ENCODE measurements at regions of chr2 and their contacts with region 1.

Region 1: DNA sequence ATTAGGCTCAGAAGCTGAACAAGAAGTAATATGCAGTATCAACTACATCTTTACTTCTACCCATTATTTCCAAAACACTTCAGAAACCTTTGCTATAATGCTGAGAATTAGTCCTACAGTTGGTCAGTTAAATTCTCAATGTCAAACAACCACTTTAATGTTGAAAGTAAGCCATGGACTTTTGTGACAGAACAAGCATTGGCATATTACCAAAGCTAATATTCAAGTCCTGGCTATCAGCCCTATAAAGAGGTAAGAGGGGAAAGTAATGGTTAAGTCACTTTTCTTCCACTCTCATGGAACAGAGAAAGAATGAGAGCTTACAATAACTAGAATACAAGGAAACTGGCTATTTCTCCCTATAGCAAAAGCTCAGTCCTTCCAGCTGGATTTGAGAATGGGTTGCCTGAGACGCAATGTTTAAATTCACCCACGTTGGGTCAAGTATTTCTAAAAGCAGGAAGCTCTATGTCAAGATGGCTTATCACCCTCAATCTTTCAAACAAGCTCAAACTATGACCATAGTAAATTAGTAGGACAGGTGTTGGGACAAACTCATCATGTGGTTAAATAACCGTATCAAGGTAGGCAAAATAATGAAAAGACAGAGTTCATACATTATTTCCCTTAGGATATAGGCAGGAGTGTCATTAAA is 31.4 kb upstream of the MFSD6 start:
- DNase-seq: no peak
- ATAC-seq: no peak
- H3K4me3 ChIP-seq: no peak overlapping the region
- H3K4me3 Mint-ChIP-seq: no peak overlapping the region
- H3K27ac ChIP-seq: no peak overlapping the region
- H3K27ac Mint-ChIP-seq: no peak overlapping the region
- H3K4me1 ChIP-seq: no peaks in the 10 kb centered on the region
- H3K4me1 Mint-ChIP-seq: peaks cover 0 to 5% (median 0%) of the 10 kb centered on the region in 7 donors
- H3K27me3 ChIP-seq: no peaks in the 10 kb centered on the region
- H3K27me3 Mint-ChIP-seq: peaks cover 0 to 3% (median 0%) of the 10 kb centered on the region in 5 donors

Region 2: GRCh38 chr2:189751080-189751658 is 625.5 kb before region 1 on chr2:
- CTCF ChIA-PET with region 1: no interaction called
- POLR2A ChIA-PET with region 1: no interaction called
- intact Hi-C with region 1: loop called in 1 of 2 experiments (anchors 1 kb)
- DNase-seq: peak in 7 of 9 donors; percentile 26 to 63 (median 49)
- ATAC-seq: peak; percentile 87
- H3K4me3 ChIP-seq: no peak overlapping the region
- H3K4me3 Mint-ChIP-seq: no peak overlapping the region
- H3K27ac ChIP-seq: no peak overlapping the region
- H3K27ac Mint-ChIP-seq: peak overlapping the region in 1 of 9 donors; percentile 1
- H3K4me1 ChIP-seq: no peaks in the 10 kb centered on the region
- H3K4me1 Mint-ChIP-seq: peaks cover 0 to 4% (median 0%) of the 10 kb centered on the region in 7 donors
- H3K27me3 ChIP-seq: no peaks in the 10 kb centered on the region
- H3K27me3 Mint-ChIP-seq: no peaks in the 10 kb centered on the region

Region 3: DNA sequence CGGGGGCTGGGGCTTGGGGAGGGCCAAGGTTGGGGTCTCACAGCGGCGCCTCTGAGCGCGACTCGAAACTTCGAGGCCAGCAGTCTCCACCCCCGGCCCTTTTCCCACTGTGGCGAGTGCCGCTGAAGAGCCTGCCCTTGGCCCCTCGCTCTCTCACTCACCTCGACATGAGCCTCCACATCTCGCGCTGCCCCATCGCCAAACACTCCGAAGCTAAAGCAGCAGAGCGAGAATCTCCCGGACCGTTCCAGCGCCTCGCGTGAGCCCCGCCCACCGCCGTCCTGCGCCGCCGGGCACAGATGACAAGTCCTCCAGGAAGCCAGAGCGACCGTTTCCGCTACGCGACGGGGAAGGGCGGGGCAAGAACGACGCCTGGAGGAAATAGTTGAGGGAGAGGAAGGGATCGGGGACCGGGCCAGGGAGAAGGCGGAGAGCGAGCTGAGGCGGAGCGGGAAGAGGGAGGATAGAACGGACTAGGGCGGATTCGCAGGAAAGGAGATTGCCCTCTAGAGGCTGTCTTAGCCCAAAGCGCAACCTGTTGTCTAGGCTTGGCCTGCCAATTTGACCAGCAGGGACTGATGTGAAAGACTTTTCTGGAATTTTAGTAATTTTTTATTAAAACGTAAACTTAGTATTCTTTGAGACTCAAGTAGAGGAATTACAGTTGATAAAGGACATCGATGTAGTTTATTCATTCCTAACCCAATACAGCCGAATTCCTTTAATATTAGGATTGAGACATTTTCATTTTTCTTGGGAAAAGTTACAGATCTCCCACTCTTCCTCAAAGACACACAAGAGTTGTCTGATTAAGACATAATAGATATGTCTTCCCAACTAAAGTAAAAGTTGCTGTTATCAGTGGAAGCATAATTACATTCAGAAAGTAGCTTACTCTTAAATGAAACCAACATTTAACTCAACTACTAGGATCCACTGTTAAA is 56.9 kb before region 1 on chr2 and contains the start of gene HIBCH:
- CTCF ChIA-PET with region 1: no interaction called
- POLR2A ChIA-PET with region 1: no interaction called
- intact Hi-C with region 1: loop called (anchors 1 to 2 kb)
- DNase-seq: peak; percentile 56 to 88 (median 68)
- ATAC-seq: peak; percentile 94
- H3K4me3 ChIP-seq: peak within 1 kb of the TSS; percentile 83
- H3K4me3 Mint-ChIP-seq: peak within 1 kb of the TSS; percentile 85 to 100 (median 97)
- H3K27ac ChIP-seq: peak within 1 kb of the TSS; percentile 82
- H3K27ac Mint-ChIP-seq: peak within 1 kb of the TSS; percentile 91 to 99 (median 95)
- H3K4me1 ChIP-seq: peaks cover 8 to 13% of the 10 kb centered on the region in 2 donors
- H3K4me1 Mint-ChIP-seq: peaks cover 27 to 54% (median 48%) of the 10 kb centered on the region in 7 donors
- H3K27me3 ChIP-seq: no peaks in the 10 kb centered on the region
- H3K27me3 Mint-ChIP-seq: no peaks in the 10 kb centered on the region
- total RNA-seq, gene HIBCH: 11.3 to 25.0 (median 21.6) TPM

Region 4: GRCh38 chr2:190343500-190344275 is 33.0 kb before region 1 on chr2 and contains the start of gene INPP1:
- CTCF ChIA-PET with region 1: no interaction called
- POLR2A ChIA-PET with region 1: no interaction called
- intact Hi-C with region 1: loop called (anchors 1 kb)
- DNase-seq: peak; percentile 9 to 57 (median 28)
- ATAC-seq: peak; percentile 86
- H3K4me3 ChIP-seq: peak within 1 kb of the TSS; percentile 66
- H3K4me3 Mint-ChIP-seq: peak within 1 kb of the TSS; percentile 64 to 94 (median 88)
- H3K27ac ChIP-seq: peak within 1 kb of the TSS; percentile 26
- H3K27ac Mint-ChIP-seq: peak within 1 kb of the TSS in 6 of 9 donors; percentile 32 to 74 (median 58)
- H3K4me1 ChIP-seq: peaks cover 3 to 11% of the 10 kb centered on the region in 2 donors
- H3K4me1 Mint-ChIP-seq: peaks cover 5 to 24% (median 12%) of the 10 kb centered on the region in 7 donors
- H3K27me3 ChIP-seq: no peaks in the 10 kb centered on the region
- H3K27me3 Mint-ChIP-seq: peaks cover 0 to 30% (median 4%) of the 10 kb centered on the region in 5 donors
- total RNA-seq, gene INPP1: 1.6 to 6.7 (median 2.5) TPM

Region 5: GRCh38 chr2:190360561-190360960 is 16.2 kb before region 1 on chr2:
- CTCF ChIA-PET with region 1: interaction called, 3 read pairs
- POLR2A ChIA-PET with region 1: no interaction called
- intact Hi-C with region 1: loop called (anchors 1 to 2 kb)
- DNase-seq: no peak
- ATAC-seq: no peak
- H3K4me3 ChIP-seq: peak overlapping the region; percentile 61
- H3K4me3 Mint-ChIP-seq: peak overlapping the region; percentile 56 to 99 (median 92)
- H3K27ac ChIP-seq: peak overlapping the region; percentile 71
- H3K27ac Mint-ChIP-seq: peak overlapping the region; percentile 42 to 97 (median 94)
- H3K4me1 ChIP-seq: peaks cover 0 to 3% of the 10 kb centered on the region in 2 donors
- H3K4me1 Mint-ChIP-seq: peaks cover 10 to 39% (median 26%) of the 10 kb centered on the region in 7 donors
- H3K27me3 ChIP-seq: no peaks in the 10 kb centered on the region
- H3K27me3 Mint-ChIP-seq: no peaks in the 10 kb centered on the region